Posterior vena cava (tissue), 2 donors: ENCODE measurements at regions of chr5 and their contacts with region 1.

Region 1: DNA sequence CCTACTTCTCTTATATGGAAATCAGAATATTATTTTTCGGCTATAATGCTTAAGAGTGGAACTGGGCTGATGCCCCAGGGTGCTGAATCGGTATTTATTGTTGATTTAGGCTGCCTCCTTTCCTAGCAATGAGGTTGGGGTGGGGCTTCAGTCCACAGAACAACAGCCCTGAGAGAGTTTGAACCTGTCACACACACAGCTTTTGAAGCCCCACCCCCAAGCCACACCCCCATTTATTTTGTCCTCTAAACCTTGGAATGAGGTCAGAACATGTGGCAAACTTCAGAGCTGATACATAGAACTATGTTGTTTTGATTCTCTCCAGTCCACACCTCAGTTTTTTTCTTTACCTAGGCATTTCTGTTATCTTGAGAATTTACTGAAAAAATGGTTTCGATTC is 51.7 kb upstream of the CAMK4 start:
- DNase-seq: no peak

Region 2: GRCh38 chr5:109199799-109200620 is 1972.5 kb before region 1 on chr5:
- intact Hi-C with region 1: loop called in 1 of 2 experiments (anchors 10 kb)
- DNase-seq: no peak

Region 3: GRCh38 chr5:111127453-111128195 is 44.9 kb before region 1 on chr5:
- intact Hi-C with region 1: no loop called
- DNase-seq: no peak

Region 4: DNA sequence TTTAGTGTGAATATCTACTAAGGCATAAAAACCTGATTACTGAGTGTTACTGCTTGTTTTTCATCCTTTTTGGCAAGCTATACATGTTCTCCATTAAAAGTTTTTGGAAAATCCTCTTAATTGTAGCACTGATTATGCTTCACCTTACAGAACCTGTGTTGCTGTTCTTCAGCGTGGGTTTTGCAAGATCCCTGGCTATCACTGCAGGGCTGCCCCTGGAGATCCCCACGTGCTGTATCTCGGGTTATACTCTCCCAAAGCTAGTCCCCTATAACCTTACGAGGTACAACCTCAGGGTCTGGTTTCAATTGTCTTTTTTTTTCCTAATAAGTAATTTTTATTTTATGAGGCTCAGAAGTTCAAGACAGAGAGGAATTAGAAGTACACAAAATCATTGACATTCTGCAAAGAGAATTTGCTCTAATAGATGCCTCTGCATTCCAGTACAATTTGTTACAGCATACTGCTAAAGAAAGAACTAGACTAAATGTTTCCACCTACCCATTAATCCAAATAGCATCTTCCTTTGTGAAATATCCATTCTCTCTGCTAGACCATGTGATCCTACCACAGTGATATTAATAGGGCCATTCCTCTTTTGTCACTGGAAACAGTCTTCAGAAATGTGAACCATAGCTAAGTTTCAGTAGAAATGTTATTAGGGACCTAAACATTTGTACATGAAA is 25.9 kb after region 1 on chr5:
- intact Hi-C with region 1: loop called in 1 of 2 experiments (anchors 1 kb)
- DNase-seq: no peak